K562 (cell line): ENCODE measurements at regions of chr15 and their contacts with region 1.

Region 1: GRCh38 chr15:36883713-36884517 is 216.4 kb downstream of the MEIS2 start:
- DNase-seq: peak; percentile 83 to 90 (median 84)
- ATAC-seq: peak; percentile 96
- H3K4me3 ChIP-seq: no peak overlapping the region
- H3K27ac ChIP-seq: no peak overlapping the region
- H3K4me1 ChIP-seq: peaks cover 3 to 13% of the 10 kb centered on the region in 2 experiments; a peak in 4 of 5 replicates
- H3K27me3 ChIP-seq: peaks cover 3 to 9% of the 10 kb centered on the region in 2 experiments; a peak in 2 of 5 replicates
- CTCF ChIP-seq: peak; percentile 82 to 90 (median 90)
- EP300 ChIP-seq: no peak
- POLR2A ChIP-seq: no peak
- RAD21 ChIP-seq: peak; percentile 91 to 96

Region 2: GRCh38 chr15:36688310-36689011 is 195.5 kb before region 1 on chr15:
- CTCF ChIA-PET with region 1: no interaction called
- POLR2A ChIA-PET with region 1: no interaction called
- in situ Hi-C with region 1: no loop called
- intact Hi-C with region 1: no loop called
- DNase-seq: peak in 1 of 4 experiments; percentile 1
- ATAC-seq: no peak
- H3K4me3 ChIP-seq: no peak overlapping the region
- H3K27ac ChIP-seq: no peak overlapping the region
- H3K4me1 ChIP-seq: no peaks in the 10 kb centered on the region
- H3K27me3 ChIP-seq: no peaks in the 10 kb centered on the region
- CTCF ChIP-seq: no peak
- EP300 ChIP-seq: no peak
- POLR2A ChIP-seq: no peak
- RAD21 ChIP-seq: no peak

Region 3: GRCh38 chr15:37100109-37100965 is 216.4 kb after region 1 on chr15 and contains the start of gene MEIS2:
- CTCF ChIA-PET with region 1: interaction called, 11 read pairs
- POLR2A ChIA-PET with region 1: no interaction called
- in situ Hi-C with region 1: loop called (anchors 10 kb)
- intact Hi-C with region 1: no loop called
- DNase-seq: peak; percentile 91 to 96 (median 94)
- ATAC-seq: peak; percentile 69
- H3K4me3 ChIP-seq: peak within 1 kb of the TSS; percentile 87
- H3K27ac ChIP-seq: peak within 1 kb of the TSS; percentile 99
- H3K4me1 ChIP-seq: peaks cover 13 to 46% of the 10 kb centered on the region in 2 experiments; a peak in 4 of 5 replicates
- H3K27me3 ChIP-seq: no peaks in the 10 kb centered on the region
- CTCF ChIP-seq: 0 out of 6 replicates have a peak, but pooled peaks of 1 of the 3 experiments have one; percentile 1
- EP300 ChIP-seq: peak; percentile 31; the same call in 1 of the 2 replicates
- POLR2A ChIP-seq: peak; percentile 90
- RAD21 ChIP-seq: no peak
- polyA plus RNA-seq, gene MEIS2: 7.5 to 8.4 TPM

Region 4: GRCh38 chr15:37106490-37107001 is 222.6 kb after region 1 on chr15:
- CTCF ChIA-PET with region 1: interaction called, 11 read pairs
- POLR2A ChIA-PET with region 1: no interaction called
- in situ Hi-C with region 1: loop called (anchors 10 kb)
- intact Hi-C with region 1: loop called (anchors 1 kb)
- DNase-seq: peak in 2 of 4 experiments; percentile 29 to 65
- ATAC-seq: no peak
- H3K4me3 ChIP-seq: no peak overlapping the region
- H3K27ac ChIP-seq: no peak overlapping the region
- H3K4me1 ChIP-seq: peaks cover 7 to 27% of the 10 kb centered on the region in 2 experiments; a peak in 3 of 5 replicates
- H3K27me3 ChIP-seq: no peaks in the 10 kb centered on the region
- CTCF ChIP-seq: peak; percentile 40 to 62 (median 50); a peak in 5 of 6 replicates
- EP300 ChIP-seq: no peak
- POLR2A ChIP-seq: no peak
- RAD21 ChIP-seq: peak; percentile 54 to 72

Region 5: GRCh38 chr15:37134699-37135131 is 250.8 kb after region 1 on chr15:
- CTCF ChIA-PET with region 1: interaction called, 48 read pairs
- POLR2A ChIA-PET with region 1: no interaction called
- in situ Hi-C with region 1: no loop called
- intact Hi-C with region 1: loop called (anchors 1 kb)
- DNase-seq: peak; percentile 50 to 78 (median 63)
- ATAC-seq: peak; percentile 92
- H3K4me3 ChIP-seq: no peak overlapping the region
- H3K27ac ChIP-seq: no peak overlapping the region
- H3K4me1 ChIP-seq: no peaks in the 10 kb centered on the region
- H3K27me3 ChIP-seq: no peaks in the 10 kb centered on the region; a peak in 1 of 5 replicates
- CTCF ChIP-seq: peak; percentile 44 to 88 (median 76); a peak in 5 of 6 replicates
- EP300 ChIP-seq: no peak
- POLR2A ChIP-seq: no peak
- RAD21 ChIP-seq: peak; percentile 43 to 56

Region 6: DNA sequence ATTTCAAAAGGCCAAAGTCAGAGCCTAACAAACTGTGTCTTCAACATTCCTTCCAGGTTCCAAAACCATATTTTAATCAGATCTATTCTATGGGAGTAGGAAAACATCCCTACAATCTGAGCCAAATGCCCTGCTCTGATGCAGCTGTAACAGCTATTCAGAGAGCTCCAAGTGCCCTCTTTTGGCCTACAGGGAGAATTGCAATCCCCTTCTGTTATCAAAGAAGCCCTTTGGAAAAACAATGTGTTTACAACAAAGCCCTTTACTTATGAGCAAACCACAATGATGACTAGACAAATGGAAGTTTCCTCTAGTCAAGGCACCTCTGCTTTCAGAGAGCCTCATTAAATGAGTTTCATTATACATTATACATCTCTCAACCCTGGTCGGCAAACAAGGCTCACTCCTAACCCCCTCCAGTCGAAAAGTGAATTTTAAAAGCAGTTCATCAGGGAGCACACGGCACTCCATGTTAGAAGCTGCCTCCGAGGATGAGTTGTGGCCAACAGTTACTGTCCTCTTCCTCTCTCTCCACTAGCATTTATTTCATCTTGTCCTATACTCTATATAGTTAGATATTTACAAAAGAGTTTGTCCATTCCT is 1008.0 kb after region 1 on chr15:
- CTCF ChIA-PET with region 1: interaction called, 3 read pairs
- POLR2A ChIA-PET with region 1: interaction called, 4 read pairs
- in situ Hi-C with region 1: loop called (anchors 25 kb)
- intact Hi-C with region 1: no loop called
- DNase-seq: peak in 3 of 4 experiments; percentile 7 to 36 (median 35)
- ATAC-seq: peak; percentile 79
- H3K4me3 ChIP-seq: no peak overlapping the region
- H3K27ac ChIP-seq: no peak overlapping the region
- H3K4me1 ChIP-seq: no peaks in the 10 kb centered on the region
- H3K27me3 ChIP-seq: no peaks in the 10 kb centered on the region
- CTCF ChIP-seq: peak; percentile 46 to 78 (median 77)
- EP300 ChIP-seq: no peak
- POLR2A ChIP-seq: no peak
- RAD21 ChIP-seq: peak; percentile 63 to 68